WTC11 (cell line): ENCODE measurements at regions of chr5 and their contacts with region 1.

Region 1: DNA sequence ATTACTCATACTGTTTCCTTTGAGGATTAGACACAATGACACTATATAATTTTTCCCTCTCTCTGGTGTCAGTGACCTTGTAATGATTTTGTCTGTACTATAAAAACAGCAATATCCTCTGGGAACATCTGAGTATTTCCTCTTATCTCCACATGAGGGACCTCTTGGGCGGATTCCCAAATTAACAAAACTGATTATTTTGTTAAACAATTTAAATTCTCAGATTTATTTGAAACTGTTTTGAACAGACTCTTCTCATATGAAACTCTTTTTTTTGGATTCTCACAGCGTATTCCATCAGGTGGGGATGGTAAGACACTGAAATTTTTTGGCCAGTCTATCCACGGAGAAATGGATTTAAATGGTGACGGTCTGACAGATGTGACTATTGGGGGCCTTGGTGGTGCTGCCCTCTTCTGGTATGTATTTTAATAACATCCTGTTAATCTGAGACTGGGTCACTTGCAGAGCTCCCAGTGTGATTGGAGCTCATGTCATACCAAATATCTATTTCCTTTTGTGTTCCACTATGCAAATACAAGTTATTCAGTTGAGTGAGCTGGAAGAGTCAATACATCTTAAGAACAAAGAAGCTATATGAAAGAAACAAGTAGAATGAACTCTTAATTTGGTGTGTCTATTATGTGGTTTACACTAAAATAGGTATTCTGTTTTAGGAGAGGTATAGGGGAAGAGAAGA is 73.8 kb upstream of the ITGA2 start:
- DNase-seq: peak; percentile 21
- ATAC-seq: peak; percentile 94
- H3K4me3 Mint-ChIP-seq: peak overlapping the region; percentile 61
- H3K27ac Mint-ChIP-seq: no peak overlapping the region
- H3K4me1 Mint-ChIP-seq: no peaks in the 10 kb centered on the region
- H3K27me3 Mint-ChIP-seq: no peaks in the 10 kb centered on the region
- CTCF ChIP-seq: peak; percentile 79

Region 2: GRCh38 chr5:52690236-52690768 is 225.0 kb before region 1 on chr5:
- CTCF ChIA-PET with region 1: interaction called, 13 read pairs
- POLR2A ChIA-PET with region 1: no interaction called
- DNase-seq: no peak
- ATAC-seq: peak; percentile 88
- H3K4me3 Mint-ChIP-seq: no peak overlapping the region
- H3K27ac Mint-ChIP-seq: peak overlapping the region; percentile 80
- H3K4me1 Mint-ChIP-seq: peaks cover 49% of the 10 kb centered on the region
- H3K27me3 Mint-ChIP-seq: no peaks in the 10 kb centered on the region
- CTCF ChIP-seq: no peak

Region 3: GRCh38 chr5:52787600-52788504 is 127.5 kb before region 1 on chr5 and contains the starts of genes ITGA1 and PELO:
- CTCF ChIA-PET with region 1: interaction called, 12 read pairs
- POLR2A ChIA-PET with region 1: no interaction called
- DNase-seq: peak; percentile 77
- ATAC-seq: peak; percentile 92
- H3K4me3 Mint-ChIP-seq: peak within 1 kb of the TSS; percentile 93
- H3K27ac Mint-ChIP-seq: peak within 1 kb of the TSS; percentile 95
- H3K4me1 Mint-ChIP-seq: peaks cover 31% of the 10 kb centered on the region
- H3K27me3 Mint-ChIP-seq: peaks cover 4% of the 10 kb centered on the region; the same call in 1 of the 2 replicates
- CTCF ChIP-seq: no peak
- total RNA-seq, gene ITGA1: 4.1 to 6.5 TPM (median 4.6 TPM) in 3 replicates
- total RNA-seq, gene PELO: 13.6 to 18.7 TPM (median 17.8 TPM) in 3 replicates

Region 4: GRCh38 chr5:52799983-52800393 is 115.3 kb before region 1 on chr5:
- CTCF ChIA-PET with region 1: interaction called, 16 read pairs
- POLR2A ChIA-PET with region 1: interaction called, 3 read pairs
- DNase-seq: peak; percentile 94
- ATAC-seq: peak; percentile 76
- H3K4me3 Mint-ChIP-seq: peak overlapping the region; percentile 91
- H3K27ac Mint-ChIP-seq: peak overlapping the region; percentile 99
- H3K4me1 Mint-ChIP-seq: peaks cover 57% of the 10 kb centered on the region
- H3K27me3 Mint-ChIP-seq: no peaks in the 10 kb centered on the region
- CTCF ChIP-seq: no peak

Region 5: DNA sequence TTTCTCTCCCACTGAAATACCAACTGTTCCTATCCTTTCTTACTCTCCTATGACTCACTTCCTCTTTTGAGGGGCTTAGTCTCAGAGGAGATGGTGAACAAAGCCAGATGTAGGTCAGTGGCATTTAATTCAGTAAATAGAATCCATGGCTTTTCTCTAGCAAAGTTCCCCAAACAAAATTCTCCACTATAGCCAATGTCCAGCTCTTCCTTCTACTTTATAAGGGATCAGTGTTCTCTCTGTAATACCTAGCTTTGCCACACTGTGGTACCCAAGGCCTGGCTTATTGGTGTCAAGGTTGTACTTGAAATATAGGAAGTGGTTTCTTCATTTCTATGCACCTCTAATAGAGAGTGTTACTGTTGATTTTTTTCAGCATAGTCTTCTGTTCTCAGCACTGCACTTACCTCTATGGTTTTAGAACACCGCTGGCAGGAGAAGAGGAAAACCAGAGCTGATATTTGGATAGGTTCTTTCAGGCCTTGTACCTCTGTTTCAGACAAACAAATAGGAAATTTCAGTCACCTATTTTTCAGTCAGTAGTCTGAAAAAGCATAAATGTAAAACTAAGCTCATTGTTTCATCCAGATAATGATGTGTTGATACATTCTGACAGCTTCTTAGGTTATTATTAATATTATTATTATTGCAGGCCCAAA is 33.2 kb after region 1 on chr5:
- CTCF ChIA-PET with region 1: interaction called, 11 read pairs
- POLR2A ChIA-PET with region 1: no interaction called
- DNase-seq: peak; percentile 60
- ATAC-seq: peak; percentile 97
- H3K4me3 Mint-ChIP-seq: no peak overlapping the region
- H3K27ac Mint-ChIP-seq: no peak overlapping the region
- H3K4me1 Mint-ChIP-seq: no peaks in the 10 kb centered on the region
- H3K27me3 Mint-ChIP-seq: no peaks in the 10 kb centered on the region
- CTCF ChIP-seq: peak; percentile 51; the same call in 1 of the 2 replicates

Region 6: DNA sequence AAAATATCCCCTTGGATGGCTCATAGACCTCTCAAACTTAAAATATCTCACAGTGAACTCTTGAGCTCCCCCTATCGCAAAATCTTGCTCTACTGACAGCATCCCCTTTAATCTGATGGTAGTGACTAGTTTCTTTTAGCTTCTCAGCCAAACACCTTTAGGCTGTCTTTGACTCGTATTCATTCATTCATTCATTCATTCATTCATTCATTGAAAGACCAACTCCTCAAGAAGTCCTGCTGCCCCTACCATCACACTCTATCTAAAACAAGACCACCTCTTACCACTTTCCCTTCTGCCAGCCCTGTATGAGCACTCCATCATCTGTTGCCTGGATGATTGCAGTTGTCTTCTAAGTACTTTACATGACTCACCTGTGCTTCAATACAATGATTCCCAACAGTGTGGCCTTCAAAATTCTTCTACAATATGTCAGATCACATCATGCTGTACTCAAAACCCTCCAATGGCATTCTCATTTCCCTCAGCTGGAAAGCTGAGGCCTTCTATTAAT is 120.6 kb after region 1 on chr5:
- CTCF ChIA-PET with region 1: interaction called, 12 read pairs
- POLR2A ChIA-PET with region 1: no interaction called
- DNase-seq: no peak
- ATAC-seq: peak; percentile 85
- H3K4me3 Mint-ChIP-seq: no peak overlapping the region
- H3K27ac Mint-ChIP-seq: no peak overlapping the region
- H3K4me1 Mint-ChIP-seq: no peaks in the 10 kb centered on the region
- H3K27me3 Mint-ChIP-seq: no peaks in the 10 kb centered on the region
- CTCF ChIP-seq: no peak